IMR-90 (cell line): ENCODE measurements at regions of chr7 and their contacts with region 1.

Region 1: GRCh38 chr7:17298207-17298839 is at the start of gene AHR:
- DNase-seq: peak; percentile 95
- ATAC-seq: peak; percentile 90
- H3K4me3 ChIP-seq: peak within 1 kb of the TSS; percentile 98
- H3K27ac ChIP-seq: peak within 1 kb of the TSS; percentile 77
- H3K4me1 ChIP-seq: peaks cover 2% of the 10 kb centered on the region; the same call in 1 of the 2 replicates
- H3K27me3 ChIP-seq: no peaks in the 10 kb centered on the region
- CTCF ChIP-seq: no peak
- POLR2A ChIP-seq: peak; percentile 84
- RAD21 ChIP-seq: no peak; the same call in 1 of the 2 replicates
- total RNA-seq, gene AHR: 55.2 and 67.2 TPM in 2 replicates

Region 2: GRCh38 chr7:16982640-16983350 is 315.5 kb before region 1 on chr7:
- CTCF ChIA-PET with region 1: interaction called, 3 read pairs
- POLR2A ChIA-PET with region 1: no interaction called
- dilution Hi-C with region 1: no loop called
- in situ Hi-C with region 1: loop called (anchors 5 kb)
- intact Hi-C with region 1: loop called (anchors 1 kb)
- DNase-seq: peak; percentile 67
- ATAC-seq: peak; percentile 74
- H3K4me3 ChIP-seq: no peak overlapping the region
- H3K27ac ChIP-seq: no peak overlapping the region
- H3K4me1 ChIP-seq: peaks cover 6% of the 10 kb centered on the region
- H3K27me3 ChIP-seq: no peaks in the 10 kb centered on the region
- CTCF ChIP-seq: peak; percentile 98
- POLR2A ChIP-seq: peak; percentile 72
- RAD21 ChIP-seq: peak; percentile 97

Region 3: DNA sequence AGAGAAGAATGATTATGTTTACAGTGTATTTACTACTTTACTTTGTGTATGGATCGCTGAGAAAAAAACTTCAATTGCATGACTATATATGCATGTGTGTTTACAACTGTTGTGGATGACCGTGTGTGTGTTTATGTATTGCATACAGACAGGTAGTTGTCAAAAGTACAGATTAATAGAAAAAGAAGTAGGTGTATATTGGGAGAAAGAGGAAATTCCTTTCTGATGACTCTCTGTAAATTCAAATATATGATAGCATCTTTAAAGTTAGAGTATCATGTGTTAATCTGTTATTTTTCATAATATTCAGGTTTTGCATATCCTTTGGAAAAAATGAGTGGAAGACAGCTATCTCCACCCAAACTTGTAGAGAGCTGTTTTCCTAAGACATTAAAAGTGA is 256.1 kb before region 1 on chr7:
- CTCF ChIA-PET with region 1: no interaction called
- POLR2A ChIA-PET with region 1: no interaction called
- dilution Hi-C with region 1: no loop called
- in situ Hi-C with region 1: no loop called
- intact Hi-C with region 1: loop called (anchors 1 kb)
- DNase-seq: no peak
- ATAC-seq: no peak
- H3K4me3 ChIP-seq: no peak overlapping the region
- H3K27ac ChIP-seq: no peak overlapping the region
- H3K4me1 ChIP-seq: peaks cover 7% of the 10 kb centered on the region
- H3K27me3 ChIP-seq: no peaks in the 10 kb centered on the region
- CTCF ChIP-seq: no peak
- POLR2A ChIP-seq: no peak
- RAD21 ChIP-seq: no peak

Region 4: GRCh38 chr7:17144322-17144721 is 154.0 kb before region 1 on chr7:
- CTCF ChIA-PET with region 1: no interaction called
- POLR2A ChIA-PET with region 1: no interaction called
- dilution Hi-C with region 1: no loop called
- in situ Hi-C with region 1: no loop called
- intact Hi-C with region 1: loop called (anchors 5 kb)
- DNase-seq: peak; percentile 46
- ATAC-seq: peak; percentile 44; the same call in 1 of the 2 replicates
- H3K4me3 ChIP-seq: no peak overlapping the region
- H3K27ac ChIP-seq: no peak overlapping the region
- H3K4me1 ChIP-seq: peaks cover 8% of the 10 kb centered on the region
- H3K27me3 ChIP-seq: no peaks in the 10 kb centered on the region
- CTCF ChIP-seq: no peak
- POLR2A ChIP-seq: no peak
- RAD21 ChIP-seq: no peak

Region 5: GRCh38 chr7:17640730-17641377 is 342.5 kb after region 1 on chr7:
- CTCF ChIA-PET with region 1: no interaction called
- POLR2A ChIA-PET with region 1: no interaction called
- dilution Hi-C with region 1: no loop called
- in situ Hi-C with region 1: loop called (anchors 10 kb)
- intact Hi-C with region 1: loop called (anchors 2 kb)
- DNase-seq: peak; percentile 31
- ATAC-seq: no peak
- H3K4me3 ChIP-seq: no peak overlapping the region
- H3K27ac ChIP-seq: no peak overlapping the region
- H3K4me1 ChIP-seq: peaks cover 2% of the 10 kb centered on the region
- H3K27me3 ChIP-seq: no peaks in the 10 kb centered on the region
- CTCF ChIP-seq: peak; percentile 54
- POLR2A ChIP-seq: no peak
- RAD21 ChIP-seq: peak; percentile 49